ENCODE measurements at regions of chrX and their contacts with region 1.

Region 1: GRCh38 chrX:68945603-68946228 is 116.9 kb downstream of the EFNB1 start:
- DNase-seq: peak in 1 of 2 experiments; percentile 53
- H3K4me3 ChIP-seq: no peak overlapping the region
- H3K27ac ChIP-seq: no peak overlapping the region
- H3K4me1 ChIP-seq: 0 out of 7 replicates have a peak, but pooled peaks cover 0 to 1% (median 0%) of the 10 kb centered on the region in 4 experiments
- H3K27me3 ChIP-seq: no peaks in the 10 kb centered on the region
- CTCF ChIP-seq: peak; percentile 42 to 60 (median 54)
- EP300 ChIP-seq: no peak
- POLR2A ChIP-seq: no peak
- RAD21 ChIP-seq: peak; percentile 29 to 56; a peak in 3 of 4 replicates

Region 2: DNA sequence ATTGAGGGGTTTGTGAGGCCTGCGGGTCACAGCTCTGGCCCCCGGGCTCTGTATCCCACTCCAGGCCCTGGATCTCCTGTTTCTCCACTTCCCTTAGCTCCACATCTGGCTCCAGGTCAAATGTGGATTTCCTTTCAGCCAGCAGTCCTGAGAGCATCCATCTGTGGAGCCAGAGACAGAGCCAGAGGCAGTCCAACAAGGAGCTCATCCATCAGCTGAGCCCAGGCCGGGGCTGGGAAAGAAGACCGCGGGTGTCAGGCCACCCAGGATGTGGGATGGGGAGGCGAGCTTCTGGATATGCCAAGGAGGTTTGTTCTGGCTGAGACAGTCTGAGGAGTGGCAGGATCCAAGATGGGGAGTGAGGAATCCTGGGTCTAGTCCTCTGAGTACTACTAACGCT is 25.2 kb before region 1 on chrX:
- CTCF ChIA-PET with region 1: interaction called, 15 read pairs
- POLR2A ChIA-PET with region 1: no interaction called
- DNase-seq: no peak
- H3K4me3 ChIP-seq: no peak overlapping the region
- H3K27ac ChIP-seq: no peak overlapping the region
- H3K4me1 ChIP-seq: peaks cover 0 to 5% (median 1%) of the 10 kb centered on the region in 4 experiments; a peak in 1 of 7 replicates
- H3K27me3 ChIP-seq: no peaks in the 10 kb centered on the region
- CTCF ChIP-seq: no peak
- EP300 ChIP-seq: no peak
- POLR2A ChIP-seq: no peak
- RAD21 ChIP-seq: no peak

Region 3: DNA sequence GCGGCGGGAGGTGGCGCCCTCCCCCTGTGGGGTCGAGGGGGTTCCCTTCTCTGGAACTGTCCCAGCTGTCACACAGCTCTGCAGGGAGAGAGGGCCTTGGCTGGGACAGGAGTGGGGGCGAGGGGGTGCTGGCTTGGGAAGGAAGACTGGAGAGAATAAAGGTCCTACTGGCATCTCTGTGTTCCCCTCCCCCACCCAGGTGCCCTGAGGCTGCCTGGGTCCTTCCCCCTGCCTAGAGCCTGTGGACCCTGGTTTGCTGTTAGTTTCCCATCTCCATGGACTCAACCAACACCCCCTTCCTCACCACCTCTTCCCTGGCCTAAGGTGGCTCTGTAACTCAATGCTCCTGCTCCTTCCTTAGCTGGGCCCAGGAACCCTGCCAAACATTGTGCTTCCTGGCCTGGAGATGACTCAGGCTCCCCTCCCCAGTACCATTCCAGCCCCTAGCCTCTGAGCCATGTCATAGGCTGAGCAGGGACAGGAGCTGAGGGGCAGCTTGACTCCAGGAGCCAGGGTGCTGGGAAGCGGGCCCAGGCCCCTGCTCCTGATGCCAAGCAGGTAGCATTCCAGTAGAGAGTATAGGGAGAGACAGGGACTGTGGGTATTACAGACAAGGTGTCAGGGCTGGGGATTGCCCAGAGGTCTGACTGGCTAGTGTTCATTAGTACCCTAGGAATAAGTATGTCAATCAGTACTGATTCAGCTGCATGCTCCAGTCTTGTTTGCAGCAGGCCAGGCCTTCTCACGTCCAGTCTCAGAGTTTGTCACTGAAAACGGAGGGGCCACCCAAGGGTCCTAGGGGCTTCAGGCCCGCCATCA is 16.2 kb before region 1 on chrX:
- CTCF ChIA-PET with region 1: interaction called, 35 read pairs
- POLR2A ChIA-PET with region 1: no interaction called
- DNase-seq: no peak
- H3K4me3 ChIP-seq: no peak overlapping the region
- H3K27ac ChIP-seq: no peak overlapping the region
- H3K4me1 ChIP-seq: peaks cover 0 to 3% (median 1%) of the 10 kb centered on the region in 4 experiments; a peak in 2 of 7 replicates
- H3K27me3 ChIP-seq: no peaks in the 10 kb centered on the region
- CTCF ChIP-seq: no peak
- EP300 ChIP-seq: no peak
- POLR2A ChIP-seq: no peak
- RAD21 ChIP-seq: no peak

Region 4: DNA sequence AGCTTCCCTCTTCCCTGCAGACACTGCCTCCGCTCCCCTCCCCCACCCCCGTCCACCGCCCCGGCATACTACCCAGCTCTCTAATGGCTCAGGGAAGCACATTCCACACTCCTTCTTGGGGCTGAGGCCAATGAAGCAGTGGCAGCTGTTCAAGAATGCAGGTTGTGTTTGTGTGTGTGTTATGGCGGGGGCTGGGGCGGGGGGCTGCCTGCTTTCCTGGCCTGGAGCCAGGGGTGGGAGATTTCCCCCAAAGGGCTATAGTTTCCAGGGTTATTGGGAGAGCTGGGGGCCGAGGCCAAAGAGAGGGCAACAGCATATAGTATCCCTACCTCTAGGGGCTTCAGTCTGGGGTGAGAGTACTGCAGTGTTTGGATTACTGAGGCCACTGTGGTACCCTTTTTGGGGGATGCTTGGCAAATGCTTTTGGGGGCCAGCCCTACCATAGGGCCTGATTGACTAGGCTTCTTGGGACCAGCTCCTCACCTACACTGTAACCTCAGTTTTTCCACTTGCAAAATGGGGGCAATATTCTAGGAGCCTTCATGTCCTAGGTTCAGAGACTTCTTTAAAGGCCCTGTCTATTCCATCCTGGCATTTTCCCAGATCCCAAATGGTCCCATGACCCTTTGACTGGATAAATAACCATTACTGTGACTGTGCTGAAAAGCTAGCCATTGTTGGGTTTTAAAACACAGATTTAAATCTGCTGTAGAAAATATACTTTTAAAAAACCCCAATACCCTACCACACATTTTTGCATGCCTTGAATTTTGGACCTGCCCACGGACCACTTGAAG is 32.7 kb after region 1 on chrX:
- CTCF ChIA-PET with region 1: interaction called, 40 read pairs
- POLR2A ChIA-PET with region 1: no interaction called
- DNase-seq: no peak
- H3K4me3 ChIP-seq: no peak overlapping the region
- H3K27ac ChIP-seq: no peak overlapping the region
- H3K4me1 ChIP-seq: peaks cover 0 to 3% (median 0%) of the 10 kb centered on the region in 4 experiments; a peak in 1 of 7 replicates
- H3K27me3 ChIP-seq: no peaks in the 10 kb centered on the region
- CTCF ChIP-seq: no peak
- EP300 ChIP-seq: no peak
- POLR2A ChIP-seq: no peak
- RAD21 ChIP-seq: 0 out of 4 replicates have a peak, but pooled peaks of 1 of the 2 experiments have one; percentile 0

Measured in H1 (cell line).